Ovary (tissue), 10 donors: ENCODE measurements at regions of chr1 and their contacts with region 1.

Region 1: DNA sequence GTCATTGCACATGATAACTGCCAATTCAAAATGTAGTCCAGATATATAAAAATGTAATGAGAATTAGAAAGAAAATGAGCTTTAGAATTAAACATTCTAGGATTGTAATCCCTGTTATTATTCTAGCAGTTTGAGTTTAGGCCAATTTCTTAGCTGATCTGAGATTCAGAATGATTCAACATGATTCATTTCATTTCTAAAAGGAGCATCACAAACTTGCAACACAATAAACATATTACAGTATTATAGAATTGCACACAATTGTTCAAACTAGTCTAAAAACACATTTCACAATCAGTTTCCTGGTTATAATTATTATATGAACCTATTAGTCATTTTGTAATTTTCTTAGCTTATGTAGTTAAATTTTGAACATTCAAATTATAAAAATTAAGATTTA is 43.3 kb upstream of the TSHB start:
- DNase-seq: no peak
- H3K4me3 ChIP-seq: no peak overlapping the region
- H3K27ac ChIP-seq: no peak overlapping the region
- H3K4me1 ChIP-seq: no peaks in the 10 kb centered on the region
- H3K27me3 ChIP-seq: no peaks in the 10 kb centered on the region
- CTCF ChIP-seq: no peak
- EP300 ChIP-seq: no peak
- POLR2A ChIP-seq: no peak

Region 2: GRCh38 chr1:114828251-114828650 is 158.0 kb before region 1 on chr1:
- intact Hi-C with region 1: no loop called
- DNase-seq: no peak
- H3K4me3 ChIP-seq: no peak overlapping the region
- H3K27ac ChIP-seq: no peak overlapping the region
- H3K4me1 ChIP-seq: no peaks in the 10 kb centered on the region
- H3K27me3 ChIP-seq: no peaks in the 10 kb centered on the region
- CTCF ChIP-seq: no peak
- EP300 ChIP-seq: no peak
- POLR2A ChIP-seq: no peak

Region 3: GRCh38 chr1:115012006-115012405 is 25.7 kb after region 1 on chr1:
- intact Hi-C with region 1: no loop called
- DNase-seq: no peak
- H3K4me3 ChIP-seq: no peak overlapping the region
- H3K27ac ChIP-seq: no peak overlapping the region
- H3K4me1 ChIP-seq: no peaks in the 10 kb centered on the region
- H3K27me3 ChIP-seq: no peaks in the 10 kb centered on the region
- CTCF ChIP-seq: no peak
- EP300 ChIP-seq: no peak
- POLR2A ChIP-seq: no peak

Region 4: DNA sequence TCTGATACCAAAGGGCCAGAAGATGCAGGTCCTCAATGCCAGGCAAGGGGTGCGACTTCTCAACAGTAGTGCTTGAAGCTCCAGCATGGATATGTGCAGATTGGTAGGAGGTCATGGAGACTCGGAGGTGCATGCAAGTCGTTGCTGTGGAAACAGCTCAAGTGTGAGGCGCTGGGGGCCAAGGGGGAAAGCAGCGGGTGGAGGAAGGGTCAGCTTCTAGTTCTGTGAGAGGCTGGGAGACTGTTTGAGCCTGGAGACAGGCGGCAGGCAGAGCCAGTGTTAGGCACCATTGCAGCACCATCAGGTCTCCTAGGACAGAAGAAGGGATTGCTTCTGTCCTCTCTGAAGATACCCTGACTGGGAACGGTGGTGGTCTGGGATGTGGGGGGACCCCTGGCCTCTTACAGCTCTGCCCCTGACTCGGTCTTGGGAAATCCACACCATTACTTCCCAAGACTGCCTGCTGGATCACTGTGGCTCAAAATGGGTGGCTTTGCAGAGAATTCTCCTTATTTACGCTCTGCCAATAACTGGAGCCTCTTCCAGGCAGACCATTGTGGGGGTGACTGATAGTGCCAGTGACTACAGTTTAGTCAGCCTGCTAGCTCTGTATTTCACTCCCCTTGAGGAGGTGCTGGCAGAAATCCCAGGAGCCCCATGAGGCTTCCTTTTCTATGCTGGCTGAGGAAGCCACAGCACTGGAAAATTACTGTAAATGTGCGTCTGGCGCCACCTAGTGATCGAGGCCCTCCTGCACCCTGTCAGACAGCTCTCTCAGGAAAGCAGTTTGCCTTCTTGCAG is 609.2 kb after region 1 on chr1:
- intact Hi-C with region 1: loop called in 1 of 4 experiments (anchors 10 kb)
- DNase-seq: peak; percentile 78 to 90 (median 89)
- H3K4me3 ChIP-seq: no peak overlapping the region
- H3K27ac ChIP-seq: no peak overlapping the region
- H3K4me1 ChIP-seq: no peaks in the 10 kb centered on the region
- H3K27me3 ChIP-seq: no peaks in the 10 kb centered on the region
- CTCF ChIP-seq: peak; percentile 76 to 80 (median 79)
- EP300 ChIP-seq: no peak
- POLR2A ChIP-seq: no peak